ENCODE measurements at regions of chr3 and their contacts with region 1.

Region 1: GRCh38 chr3:171666516-171666915 is 143.8 kb downstream of the PLD1 start:
- DNase-seq: no peak
- CTCF ChIP-seq: no peak

Region 2: GRCh38 chr3:171654809-171655208 is 11.7 kb before region 1 on chr3:
- CTCF ChIA-PET with region 1: interaction called, 17 read pairs
- POLR2A ChIA-PET with region 1: no interaction called
- DNase-seq: no peak
- CTCF ChIP-seq: no peak

Region 3: GRCh38 chr3:171743327-171744157 is 77.0 kb after region 1 on chr3:
- CTCF ChIA-PET with region 1: no interaction called
- POLR2A ChIA-PET with region 1: no interaction called
- DNase-seq: no peak
- CTCF ChIP-seq: no peak

Measured in GM10248 (cell line).